Body of pancreas (tissue), 4 donors: ENCODE measurements at regions of chr11 and their contacts with region 1.

Region 1: DNA sequence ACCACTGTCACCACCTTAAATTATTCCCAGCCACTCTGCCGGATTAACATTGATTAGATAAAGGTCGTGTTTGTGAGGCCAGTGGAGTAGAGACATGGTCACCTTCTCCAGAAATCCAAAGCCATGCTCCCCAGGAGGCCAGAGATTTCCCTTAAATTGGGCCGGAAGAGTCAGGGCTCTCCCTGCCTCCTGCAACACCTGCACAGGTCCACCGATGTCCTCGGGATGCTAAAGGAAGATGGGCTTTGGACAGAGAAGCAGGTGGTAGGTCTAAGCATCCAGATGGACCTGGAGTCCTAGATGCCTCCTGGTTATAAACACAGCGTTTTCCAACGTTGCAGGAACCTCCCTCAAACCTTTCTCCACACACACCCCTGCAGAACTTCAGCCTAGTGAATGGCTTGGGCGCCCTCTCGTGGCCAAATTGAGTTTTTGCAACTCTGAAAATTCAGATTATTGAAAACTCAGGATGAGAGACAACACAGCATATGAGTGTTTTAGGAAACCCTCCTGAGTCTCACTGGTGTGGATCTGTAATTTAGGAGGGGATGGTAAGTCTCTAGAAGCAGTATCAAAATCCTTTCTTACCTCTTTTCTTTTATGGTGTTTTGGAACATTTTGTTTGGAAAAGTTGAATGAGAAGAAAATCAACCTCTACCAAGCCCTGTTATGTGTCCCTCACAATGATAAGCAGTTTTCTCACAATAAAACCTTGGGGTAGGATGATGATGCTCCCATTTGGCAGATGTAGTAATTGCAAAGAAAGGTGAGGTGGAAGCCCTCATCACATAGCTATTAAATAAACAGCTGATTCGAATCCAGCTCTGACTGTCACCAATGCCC is 109.6 kb downstream of the RRAS2 start:
- DNase-seq: peak; percentile 52 to 62 (median 58)
- ATAC-seq: peak; percentile 45
- H3K4me3 ChIP-seq: no peak overlapping the region
- H3K27ac ChIP-seq: no peak overlapping the region
- H3K4me1 ChIP-seq: no peaks in the 10 kb centered on the region
- H3K27me3 ChIP-seq: no peaks in the 10 kb centered on the region
- CTCF ChIP-seq: peak; percentile 76 to 87 (median 84)
- POLR2A ChIP-seq: no peak

Region 2: DNA sequence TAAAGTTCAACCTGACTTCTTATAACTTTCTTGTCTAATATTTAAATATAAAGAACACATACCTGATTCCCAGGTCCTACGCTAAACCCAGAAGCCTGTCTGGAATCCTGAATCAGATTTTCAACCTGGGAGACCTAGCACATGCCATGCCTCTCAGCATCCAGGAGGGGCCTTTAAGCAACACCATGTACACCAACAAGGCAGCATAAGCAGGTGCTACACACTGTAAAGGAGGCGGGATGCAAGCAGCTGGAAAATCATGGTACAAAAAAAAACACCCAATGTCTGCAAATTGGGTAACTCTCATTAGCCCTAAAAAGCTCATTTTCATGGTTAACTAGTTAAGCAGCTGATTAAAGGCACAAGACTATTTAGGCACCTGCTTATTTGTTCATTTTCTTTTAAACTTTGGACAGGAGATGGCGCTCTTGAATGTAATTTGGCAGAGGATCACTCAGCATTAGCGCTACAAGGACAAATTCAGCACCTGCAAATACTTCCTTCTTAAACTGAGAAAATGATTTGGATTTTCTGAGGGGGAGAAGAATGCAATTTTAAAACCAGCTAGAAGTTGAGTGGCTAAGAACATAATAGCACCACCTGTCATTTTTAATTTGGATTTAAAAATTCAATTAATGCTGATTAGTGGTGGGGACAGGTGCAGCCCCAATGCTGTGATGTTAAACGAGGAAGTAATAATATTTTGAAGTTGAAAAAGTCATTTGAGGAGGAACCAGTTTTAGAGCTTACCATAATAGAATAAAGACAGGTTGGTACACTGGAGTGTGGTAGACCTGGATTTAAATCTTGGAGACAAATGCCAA is 476.9 kb before region 1 on chr11:
- intact Hi-C with region 1: loop called (anchors 10 kb)
- DNase-seq: peak in 3 of 4 donors; percentile 9 to 55 (median 13)
- ATAC-seq: peak; percentile 48
- H3K4me3 ChIP-seq: no peak overlapping the region
- H3K27ac ChIP-seq: no peak overlapping the region
- H3K4me1 ChIP-seq: no peaks in the 10 kb centered on the region
- H3K27me3 ChIP-seq: no peaks in the 10 kb centered on the region
- CTCF ChIP-seq: peak in 6 of 7 experiments; percentile 26 to 71 (median 54)
- POLR2A ChIP-seq: no peak

Region 3: GRCh38 chr11:13955971-13956421 is 293.3 kb before region 1 on chr11:
- intact Hi-C with region 1: loop called (anchors 5 kb)
- DNase-seq: peak; percentile 55 to 67 (median 64)
- ATAC-seq: peak; percentile 47
- H3K4me3 ChIP-seq: no peak overlapping the region
- H3K27ac ChIP-seq: no peak overlapping the region
- H3K4me1 ChIP-seq: no peaks in the 10 kb centered on the region
- H3K27me3 ChIP-seq: no peaks in the 10 kb centered on the region
- CTCF ChIP-seq: peak; percentile 41 to 86 (median 78)
- POLR2A ChIP-seq: no peak

Region 4: GRCh38 chr11:14125529-14125928 is 123.8 kb before region 1 on chr11:
- intact Hi-C with region 1: no loop called
- DNase-seq: no peak
- ATAC-seq: no peak
- H3K4me3 ChIP-seq: no peak overlapping the region
- H3K27ac ChIP-seq: no peak overlapping the region
- H3K4me1 ChIP-seq: no peaks in the 10 kb centered on the region
- H3K27me3 ChIP-seq: no peaks in the 10 kb centered on the region
- CTCF ChIP-seq: no peak
- POLR2A ChIP-seq: no peak